Right ventricle myocardium inferior (tissue), 1 donor: ENCODE measurements at regions of chr1 and their contacts with region 1.

Region 1: GRCh38 chr1:53889304-53890298 is at the start of gene YIPF1:
- DNase-seq: peak; percentile 96
- ATAC-seq: peak; percentile 99
- total RNA-seq, gene YIPF1: 16.1 TPM

Region 2: GRCh38 chr1:52751589-52752483 is 1137.8 kb before region 1 on chr1:
- intact Hi-C with region 1: no loop called
- DNase-seq: no peak
- ATAC-seq: peak; percentile 7

Region 3: DNA sequence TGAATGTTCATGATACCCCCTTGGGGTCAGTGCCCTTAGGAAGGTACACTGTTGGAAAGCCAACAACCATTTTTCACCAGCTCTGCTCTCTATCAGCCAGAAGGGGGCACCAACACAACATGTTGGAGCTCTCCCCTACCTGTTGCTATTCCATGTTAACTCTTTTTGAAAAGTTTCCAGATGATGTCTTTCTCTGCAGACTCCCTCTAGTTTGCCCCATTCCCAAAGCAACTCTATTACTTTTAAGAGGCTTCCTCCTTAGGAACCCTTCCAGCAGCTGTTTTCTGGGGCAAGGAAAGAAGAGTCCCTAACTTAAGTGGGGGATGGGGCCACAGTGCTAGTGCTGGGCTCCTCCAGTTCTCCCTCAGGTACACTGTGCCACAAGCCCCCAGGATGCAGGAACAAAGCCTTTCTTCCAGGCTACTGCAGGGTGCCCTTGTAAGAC is 28.6 kb before region 1 on chr1:
- intact Hi-C with region 1: no loop called
- DNase-seq: no peak
- ATAC-seq: peak; percentile 57

Region 4: GRCh38 chr1:53909946-53910345 is 20.3 kb after region 1 on chr1:
- intact Hi-C with region 1: no loop called
- DNase-seq: no peak
- ATAC-seq: no peak

Region 5: DNA sequence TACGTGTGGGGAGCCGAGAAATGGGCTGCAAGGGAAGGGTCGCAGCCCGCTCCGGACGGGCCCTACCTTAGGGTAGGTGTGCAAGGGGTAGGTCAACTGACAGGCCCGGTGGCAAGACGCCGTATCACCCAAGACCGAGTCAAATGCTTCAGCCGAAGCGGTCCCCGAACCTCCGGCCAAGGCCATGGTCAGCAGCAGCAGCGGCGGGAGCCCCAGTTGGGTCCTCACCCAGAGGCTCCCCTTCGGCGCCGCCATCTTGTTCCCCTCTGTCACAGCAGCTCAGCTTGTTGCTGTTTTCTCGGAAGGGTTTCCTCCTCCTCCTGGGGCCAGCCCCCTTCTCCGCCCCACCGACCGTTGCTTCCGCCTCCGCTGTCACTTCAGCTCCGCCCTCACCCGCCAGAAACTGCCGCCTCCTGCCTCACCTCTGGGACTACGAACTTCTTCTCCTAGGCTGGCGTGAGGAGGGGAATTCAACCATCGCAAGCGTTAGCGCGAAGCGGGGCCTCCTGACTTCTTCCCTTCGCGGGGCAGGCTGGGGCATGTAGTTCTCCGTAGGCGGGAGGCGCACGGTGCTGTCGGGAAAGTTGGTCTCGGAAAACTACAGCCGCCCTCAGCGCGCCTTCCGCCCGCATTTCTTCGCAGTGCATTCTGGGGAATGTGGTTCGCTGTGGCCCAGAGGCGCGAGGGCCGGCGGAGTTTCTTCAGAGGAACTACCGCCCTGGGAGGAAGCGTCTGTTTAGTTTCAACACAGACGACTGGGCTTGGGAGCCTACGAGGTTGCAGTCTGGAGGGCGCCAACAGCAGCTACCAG is 163.5 kb after region 1 on chr1 and contains the starts of genes TCEANC2 and TMEM59:
- intact Hi-C with region 1: loop called (anchors 5 kb)
- DNase-seq: peak; percentile 99
- ATAC-seq: peak; percentile 99
- total RNA-seq, gene TCEANC2: 4.7 TPM
- total RNA-seq, gene TMEM59: 341 TPM